ENCODE measurements at regions of chr12 and their contacts with region 1.

Region 1: DNA sequence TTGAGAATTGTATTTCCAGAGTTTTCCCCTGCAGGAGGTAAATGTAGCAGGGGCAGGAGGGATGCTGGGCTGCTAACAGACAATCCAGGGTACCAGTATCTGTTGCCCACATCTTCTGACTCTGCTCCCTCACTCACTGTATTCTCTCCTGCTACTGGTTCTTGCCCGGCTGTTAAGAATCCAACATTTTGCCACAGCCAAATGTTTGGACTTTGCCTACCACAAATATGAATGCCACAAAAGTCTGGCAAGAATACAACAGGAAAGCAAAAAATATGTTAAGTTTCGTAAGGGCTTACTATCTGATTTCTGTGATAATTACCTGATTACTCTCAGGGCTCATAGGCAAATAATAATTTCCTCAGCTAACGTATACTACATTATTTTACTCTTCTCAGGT is 160.0 kb downstream of the BCAT1 start:
- DNase-seq: no peak
- H3K4me3 ChIP-seq: no peak overlapping the region
- H3K27ac ChIP-seq: no peak overlapping the region
- H3K4me1 ChIP-seq: no peaks in the 10 kb centered on the region
- H3K27me3 ChIP-seq: peaks cover 0 to 5% of the 10 kb centered on the region in 2 experiments
- CTCF ChIP-seq: no peak
- POLR2A ChIP-seq: no peak

Region 2: GRCh38 chr12:24778486-24779304 is 10.2 kb before region 1 on chr12:
- CTCF ChIA-PET with region 1: interaction called, 10 read pairs
- POLR2A ChIA-PET with region 1: no interaction called
- dilution Hi-C with region 1: no loop called
- intact Hi-C with region 1: no loop called
- DNase-seq: peak; percentile 39
- H3K4me3 ChIP-seq: no peak overlapping the region
- H3K27ac ChIP-seq: no peak overlapping the region
- H3K4me1 ChIP-seq: no peaks in the 10 kb centered on the region
- H3K27me3 ChIP-seq: peaks cover 0 to 4% of the 10 kb centered on the region in 2 experiments
- CTCF ChIP-seq: peak; percentile 17 to 26
- POLR2A ChIP-seq: no peak